B cell (primary cell): ENCODE measurements at regions of chr1 and their contacts with region 1.

Region 1: GRCh38 chr1:205775015-205775716 is at the start of gene RAB29:
- DNase-seq: peak; percentile 94
- ATAC-seq: peak; percentile 89
- H3K4me3 ChIP-seq: peak within 1 kb of the TSS; percentile 73 to 89 (median 86)
- H3K4me3 Mint-ChIP-seq: peak within 1 kb of the TSS; percentile 98
- H3K27ac ChIP-seq: peak within 1 kb of the TSS; percentile 93 to 96
- H3K27ac Mint-ChIP-seq: peak within 1 kb of the TSS; percentile 99
- H3K4me1 ChIP-seq: peaks cover 44 to 48% of the 10 kb centered on the region in 2 donors
- H3K4me1 Mint-ChIP-seq: peaks cover 54% of the 10 kb centered on the region
- H3K27me3 ChIP-seq: no peaks in the 10 kb centered on the region
- H3K27me3 Mint-ChIP-seq: no peaks in the 10 kb centered on the region
- CTCF ChIP-seq: no peak
- total RNA-seq, gene RAB29: 59.7 and 61.4 TPM in 2 replicates

Region 2: GRCh38 chr1:205121660-205122488 is 653.3 kb before region 1 on chr1 and contains the start of gene RBBP5:
- CTCF ChIA-PET with region 1: no interaction called
- POLR2A ChIA-PET with region 1: no interaction called
- intact Hi-C with region 1: loop called (anchors 10 kb)
- DNase-seq: peak; percentile 99
- ATAC-seq: peak; percentile 93
- H3K4me3 ChIP-seq: peak within 1 kb of the TSS; percentile 74 to 99 (median 87)
- H3K4me3 Mint-ChIP-seq: peak within 1 kb of the TSS; percentile 98
- H3K27ac ChIP-seq: peak within 1 kb of the TSS; percentile 95 to 96
- H3K27ac Mint-ChIP-seq: peak within 1 kb of the TSS; percentile 100
- H3K4me1 ChIP-seq: peaks cover 31 to 40% of the 10 kb centered on the region in 2 donors
- H3K4me1 Mint-ChIP-seq: peaks cover 48% of the 10 kb centered on the region
- H3K27me3 ChIP-seq: no peaks in the 10 kb centered on the region
- H3K27me3 Mint-ChIP-seq: no peaks in the 10 kb centered on the region
- CTCF ChIP-seq: peak; percentile 73
- total RNA-seq, gene RBBP5: 18.5 and 31.7 TPM in 2 replicates

Region 3: DNA sequence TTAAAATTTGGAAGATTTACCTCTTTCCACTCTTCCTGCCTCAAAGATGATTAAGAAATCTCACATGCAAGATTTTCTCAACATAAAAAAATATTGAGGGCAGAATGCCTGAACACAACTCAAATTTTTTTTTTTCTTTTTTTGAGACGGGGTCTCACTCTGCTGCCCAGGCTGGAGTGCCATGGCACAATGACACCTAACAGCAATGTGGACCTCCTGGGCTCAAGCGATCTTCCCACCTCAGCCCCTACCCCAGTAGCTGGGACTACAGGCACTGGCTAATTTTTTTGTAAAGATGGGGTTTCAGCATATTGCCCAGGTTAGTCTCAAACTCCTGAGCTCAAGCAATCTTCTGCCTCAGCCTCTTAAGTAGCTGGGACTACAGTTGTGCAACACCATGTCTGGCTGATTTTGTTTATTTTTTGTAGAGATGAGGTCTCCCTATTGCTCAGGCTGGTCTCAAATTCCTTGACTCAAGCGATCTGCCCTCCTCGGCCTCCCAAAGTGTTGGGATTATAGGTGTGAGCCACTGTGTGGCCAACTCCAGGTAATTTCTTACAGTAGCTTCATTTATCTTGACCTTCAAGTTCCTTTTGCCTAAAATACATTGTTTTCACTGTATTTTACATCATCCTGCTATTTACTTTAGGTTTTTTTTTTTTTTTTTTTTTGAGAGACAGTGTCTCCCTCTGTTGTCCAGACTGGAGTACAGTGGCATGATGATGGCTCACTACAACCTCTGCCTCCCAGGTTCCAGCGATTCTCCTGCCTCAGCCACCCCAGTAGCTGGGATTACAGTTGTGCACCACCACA is 35.6 kb before region 1 on chr1:
- CTCF ChIA-PET with region 1: no interaction called
- POLR2A ChIA-PET with region 1: no interaction called
- intact Hi-C with region 1: loop called (anchors 5 kb)
- DNase-seq: no peak
- ATAC-seq: no peak
- H3K4me3 ChIP-seq: no peak overlapping the region
- H3K4me3 Mint-ChIP-seq: no peak overlapping the region
- H3K27ac ChIP-seq: no peak overlapping the region
- H3K27ac Mint-ChIP-seq: no peak overlapping the region
- H3K4me1 ChIP-seq: peaks cover 10 to 19% of the 10 kb centered on the region in 2 donors
- H3K4me1 Mint-ChIP-seq: peaks cover 44% of the 10 kb centered on the region
- H3K27me3 ChIP-seq: no peaks in the 10 kb centered on the region
- H3K27me3 Mint-ChIP-seq: no peaks in the 10 kb centered on the region
- CTCF ChIP-seq: no peak

Region 4: GRCh38 chr1:205812878-205813754 is 38.0 kb after region 1 on chr1 and contains the start of gene SLC41A1:
- CTCF ChIA-PET with region 1: interaction called, 3 read pairs
- POLR2A ChIA-PET with region 1: no interaction called
- intact Hi-C with region 1: loop called (anchors 1 kb)
- DNase-seq: peak; percentile 96
- ATAC-seq: peak; percentile 96
- H3K4me3 ChIP-seq: peak within 1 kb of the TSS; percentile 52 to 83 (median 80)
- H3K4me3 Mint-ChIP-seq: peak within 1 kb of the TSS; percentile 96
- H3K27ac ChIP-seq: peak within 1 kb of the TSS; percentile 60 to 77
- H3K27ac Mint-ChIP-seq: peak within 1 kb of the TSS; percentile 92
- H3K4me1 ChIP-seq: peaks cover 33 to 46% of the 10 kb centered on the region in 2 donors
- H3K4me1 Mint-ChIP-seq: peaks cover 51% of the 10 kb centered on the region
- H3K27me3 ChIP-seq: no peaks in the 10 kb centered on the region
- H3K27me3 Mint-ChIP-seq: no peaks in the 10 kb centered on the region
- CTCF ChIP-seq: no peak
- total RNA-seq, gene SLC41A1: 24.2 and 24.7 TPM in 2 replicates

Region 5: GRCh38 chr1:205849619-205850355 is 74.6 kb after region 1 on chr1 and contains the start of gene PM20D1:
- CTCF ChIA-PET with region 1: interaction called, 3 read pairs
- POLR2A ChIA-PET with region 1: interaction called, 5 read pairs
- intact Hi-C with region 1: loop called (anchors 1 kb)
- DNase-seq: peak; percentile 91
- ATAC-seq: peak; percentile 99
- H3K4me3 ChIP-seq: peak within 1 kb of the TSS in 4 of 5 experiments; percentile 57 to 65 (median 62)
- H3K4me3 Mint-ChIP-seq: peak within 1 kb of the TSS; percentile 96
- H3K27ac ChIP-seq: peak within 1 kb of the TSS; percentile 70 to 88
- H3K27ac Mint-ChIP-seq: peak within 1 kb of the TSS; percentile 96
- H3K4me1 ChIP-seq: peaks cover 7 to 9% of the 10 kb centered on the region in 2 donors
- H3K4me1 Mint-ChIP-seq: peaks cover 15% of the 10 kb centered on the region
- H3K27me3 ChIP-seq: no peaks in the 10 kb centered on the region
- H3K27me3 Mint-ChIP-seq: no peaks in the 10 kb centered on the region
- CTCF ChIP-seq: no peak
- total RNA-seq, gene PM20D1: 2.3 and 3.3 TPM in 2 replicates

Region 6: GRCh38 chr1:206128196-206128595 is 353.0 kb after region 1 on chr1:
- CTCF ChIA-PET with region 1: no interaction called
- POLR2A ChIA-PET with region 1: no interaction called
- intact Hi-C with region 1: no loop called
- DNase-seq: no peak
- ATAC-seq: no peak
- H3K4me3 ChIP-seq: no peak overlapping the region
- H3K4me3 Mint-ChIP-seq: no peak overlapping the region
- H3K27ac ChIP-seq: no peak overlapping the region
- H3K27ac Mint-ChIP-seq: no peak overlapping the region
- H3K4me1 ChIP-seq: no peaks in the 10 kb centered on the region
- H3K4me1 Mint-ChIP-seq: no peaks in the 10 kb centered on the region
- H3K27me3 ChIP-seq: peaks cover 0 to 14% (median 8%) of the 10 kb centered on the region in 4 experiments
- H3K27me3 Mint-ChIP-seq: peaks cover 36% of the 10 kb centered on the region
- CTCF ChIP-seq: no peak